ENCODE measurements at regions of chr10 and their contacts with region 1.

Region 1: GRCh38 chr10:43436400-43437140 is at the start of gene ZNF487:
- DNase-seq: peak; percentile 85 to 94 (median 93)
- H3K4me3 ChIP-seq: peak within 1 kb of the TSS; percentile 68
- H3K27ac ChIP-seq: peak within 1 kb of the TSS; percentile 84 to 97
- H3K4me1 ChIP-seq: peaks cover 2% of the 10 kb centered on the region
- H3K27me3 ChIP-seq: no peaks in the 10 kb centered on the region
- CTCF ChIP-seq: peak in 2 of 3 donors; percentile 13 to 25
- EP300 ChIP-seq: no peak
- POLR2A ChIP-seq: peak; percentile 89
- total RNA-seq, gene ZNF487: 6.4 to 30.1 (median 8.7) TPM

Region 2: DNA sequence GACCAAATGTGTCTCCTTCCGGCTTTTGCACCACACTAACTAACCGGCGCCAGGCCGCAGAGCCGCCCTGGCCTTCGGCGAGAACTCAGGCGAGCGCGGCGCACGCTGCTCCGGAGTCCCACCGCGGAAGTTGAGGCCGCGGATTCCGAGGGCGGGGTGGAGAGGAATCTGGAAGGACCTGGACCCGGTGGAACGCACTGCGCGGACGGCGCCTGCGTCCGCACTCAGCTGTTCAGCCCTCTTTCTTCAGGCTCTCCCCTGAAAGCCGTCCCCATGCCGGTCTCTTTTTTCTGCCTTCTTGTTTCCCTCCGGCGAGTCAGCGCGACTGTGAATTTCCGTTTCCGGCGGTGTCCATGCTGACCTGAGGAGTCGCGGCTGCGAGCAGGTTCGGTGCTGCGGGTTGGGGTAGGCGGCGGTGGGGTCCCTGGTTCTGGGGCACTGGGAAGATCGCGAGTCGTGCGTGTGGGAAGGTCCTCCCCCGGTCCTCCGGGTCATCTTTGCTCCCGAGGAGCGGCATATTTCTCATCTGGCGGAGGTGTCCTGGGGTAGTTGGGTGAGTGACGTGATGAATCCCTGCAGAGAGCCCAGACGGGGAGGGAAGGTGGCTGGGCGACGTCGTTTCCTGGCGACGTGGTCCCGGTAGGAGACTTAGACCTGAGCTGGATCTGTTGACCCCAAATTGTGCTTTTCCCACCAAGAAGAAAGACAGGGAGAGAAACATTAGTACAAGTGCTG is 654.0 kb before region 1 on chr10 and contains the start of gene BMS1:
- intact Hi-C with region 1: loop called in 1 of 4 experiments (anchors 5 kb)
- DNase-seq: peak; percentile 80 to 90 (median 85)
- H3K4me3 ChIP-seq: peak within 1 kb of the TSS; percentile 92
- H3K27ac ChIP-seq: peak within 1 kb of the TSS; percentile 66
- H3K4me1 ChIP-seq: peaks cover 6% of the 10 kb centered on the region
- H3K27me3 ChIP-seq: no peaks in the 10 kb centered on the region
- CTCF ChIP-seq: no peak
- EP300 ChIP-seq: no peak
- POLR2A ChIP-seq: peak; percentile 71
- total RNA-seq, gene BMS1: 10.0 to 16.0 (median 14.1) TPM

Region 3: DNA sequence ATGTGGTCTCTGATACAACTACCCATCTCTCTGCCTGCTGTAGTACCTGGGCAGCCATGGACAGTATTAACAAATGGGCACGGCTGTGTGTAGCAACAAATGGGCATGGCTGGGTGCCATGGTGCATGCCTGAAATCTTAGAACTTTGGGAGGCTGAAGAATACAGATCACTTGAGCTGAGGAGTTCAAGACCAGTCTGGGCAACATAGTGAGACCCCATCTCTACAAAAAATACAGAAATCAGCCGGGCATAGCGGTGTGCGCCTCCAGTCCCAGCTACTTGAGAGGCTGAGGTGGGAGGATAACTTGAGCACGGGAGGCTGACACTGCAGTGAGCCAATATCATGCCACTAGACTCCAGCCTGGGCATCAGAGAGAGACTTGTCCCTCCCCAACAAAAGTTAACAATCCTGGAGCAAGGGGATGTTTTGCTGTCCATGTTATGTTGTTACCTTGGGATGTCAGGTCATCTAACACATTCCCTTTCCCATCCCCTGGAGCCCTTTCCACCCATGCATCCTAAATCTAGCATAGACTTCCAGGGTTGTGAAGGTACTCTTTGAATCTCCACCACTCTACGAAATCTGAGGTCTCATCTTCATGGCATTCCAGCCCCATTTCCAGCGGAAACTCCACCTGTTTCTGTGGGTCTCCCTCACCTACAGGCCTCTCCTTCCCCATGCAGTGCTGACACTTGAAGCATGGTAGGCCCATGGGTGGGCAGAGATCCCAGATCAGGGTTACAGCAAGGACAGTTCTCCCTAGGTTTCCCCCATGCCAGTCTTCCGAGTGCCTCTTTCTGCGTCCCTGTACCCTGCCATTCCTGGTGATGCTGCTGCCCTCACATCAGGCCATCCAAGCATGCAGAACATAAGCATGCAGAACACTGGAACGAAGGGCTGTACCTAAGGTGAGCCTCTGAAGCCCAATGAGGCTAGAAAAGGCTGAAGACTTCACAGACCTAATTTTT is 52.0 kb before region 1 on chr10:
- intact Hi-C with region 1: no loop called
- DNase-seq: peak in 1 of 5 donors; percentile 23
- H3K4me3 ChIP-seq: no peak overlapping the region
- H3K27ac ChIP-seq: no peak overlapping the region
- H3K4me1 ChIP-seq: peaks cover 2% of the 10 kb centered on the region
- H3K27me3 ChIP-seq: no peaks in the 10 kb centered on the region
- CTCF ChIP-seq: no peak
- EP300 ChIP-seq: no peak
- POLR2A ChIP-seq: no peak

Region 4: DNA sequence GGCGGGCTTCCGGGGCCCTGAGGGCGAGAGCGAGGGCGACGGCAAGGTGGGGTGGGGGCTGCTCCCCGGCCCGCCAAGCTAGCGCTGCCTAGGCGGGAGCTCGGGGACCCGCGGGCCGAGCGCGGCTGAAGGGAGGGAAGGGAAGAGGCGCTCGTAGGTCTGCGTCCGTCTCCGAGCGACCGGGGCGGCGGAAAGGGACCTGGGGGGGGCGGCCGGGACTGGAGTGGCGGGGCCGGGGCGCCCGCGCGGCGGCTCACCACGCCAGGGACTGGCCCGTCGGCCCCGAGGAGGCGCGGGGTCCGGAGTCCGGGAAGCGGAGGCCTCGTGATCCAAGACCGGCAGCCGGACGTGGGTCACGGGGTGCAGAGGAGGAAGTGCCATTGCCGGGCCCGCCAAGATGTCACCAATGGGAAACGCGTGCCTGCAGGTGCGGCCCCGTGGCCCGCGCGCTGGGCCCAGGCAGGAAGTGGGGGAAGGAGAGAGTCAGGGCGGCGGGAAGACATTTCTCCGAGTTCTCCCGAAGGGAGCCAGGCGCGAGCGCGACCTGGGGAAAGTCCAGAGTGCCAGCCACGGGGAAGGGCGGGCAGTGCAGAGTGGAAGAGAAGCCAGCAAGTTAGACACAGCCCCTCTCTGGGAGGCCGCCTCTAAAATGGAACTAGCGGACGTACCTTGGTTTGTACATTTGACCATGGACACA is 39.5 kb before region 1 on chr10:
- intact Hi-C with region 1: loop called in 1 of 4 experiments (anchors 5 kb)
- DNase-seq: peak; percentile 80 to 84 (median 83)
- H3K4me3 ChIP-seq: peak overlapping the region; percentile 59
- H3K27ac ChIP-seq: peak overlapping the region; percentile 94 to 95
- H3K4me1 ChIP-seq: peaks cover 20% of the 10 kb centered on the region
- H3K27me3 ChIP-seq: no peaks in the 10 kb centered on the region
- CTCF ChIP-seq: no peak
- EP300 ChIP-seq: no peak
- POLR2A ChIP-seq: peak; percentile 52

Region 5: GRCh38 chr10:43420369-43421200 is 16.0 kb before region 1 on chr10:
- intact Hi-C with region 1: loop called in 1 of 4 experiments (anchors 2 kb)
- DNase-seq: peak; percentile 87 to 92 (median 91)
- H3K4me3 ChIP-seq: peak overlapping the region; percentile 69
- H3K27ac ChIP-seq: peak overlapping the region; percentile 90
- H3K4me1 ChIP-seq: peaks cover 5% of the 10 kb centered on the region
- H3K27me3 ChIP-seq: no peaks in the 10 kb centered on the region
- CTCF ChIP-seq: no peak
- EP300 ChIP-seq: peak; percentile 57
- POLR2A ChIP-seq: peak; percentile 66

Measured in ovary (tissue), 10 donors.